ENCODE measurements at regions of chr3 and their contacts with region 1.

Region 1: GRCh38 chr3:62193586-62194345 is 179.6 kb downstream of the FEZF2 start:
- DNase-seq: no peak
- ATAC-seq: no peak
- H3K4me3 ChIP-seq: no peak overlapping the region
- H3K27ac ChIP-seq: no peak overlapping the region
- H3K4me1 ChIP-seq: no peaks in the 10 kb centered on the region
- H3K27me3 ChIP-seq: 0 out of 2 replicates have a peak, but pooled peaks cover 14% of the 10 kb centered on the region
- CTCF ChIP-seq: no peak

Region 2: GRCh38 chr3:62242831-62243509 is 49.2 kb after region 1 on chr3:
- CTCF ChIA-PET with region 1: no interaction called
- POLR2A ChIA-PET with region 1: no interaction called
- intact Hi-C with region 1: no loop called
- DNase-seq: no peak
- ATAC-seq: no peak
- H3K4me3 ChIP-seq: no peak overlapping the region
- H3K27ac ChIP-seq: no peak overlapping the region
- H3K4me1 ChIP-seq: no peaks in the 10 kb centered on the region
- H3K27me3 ChIP-seq: no peaks in the 10 kb centered on the region
- CTCF ChIP-seq: no peak

Region 3: DNA sequence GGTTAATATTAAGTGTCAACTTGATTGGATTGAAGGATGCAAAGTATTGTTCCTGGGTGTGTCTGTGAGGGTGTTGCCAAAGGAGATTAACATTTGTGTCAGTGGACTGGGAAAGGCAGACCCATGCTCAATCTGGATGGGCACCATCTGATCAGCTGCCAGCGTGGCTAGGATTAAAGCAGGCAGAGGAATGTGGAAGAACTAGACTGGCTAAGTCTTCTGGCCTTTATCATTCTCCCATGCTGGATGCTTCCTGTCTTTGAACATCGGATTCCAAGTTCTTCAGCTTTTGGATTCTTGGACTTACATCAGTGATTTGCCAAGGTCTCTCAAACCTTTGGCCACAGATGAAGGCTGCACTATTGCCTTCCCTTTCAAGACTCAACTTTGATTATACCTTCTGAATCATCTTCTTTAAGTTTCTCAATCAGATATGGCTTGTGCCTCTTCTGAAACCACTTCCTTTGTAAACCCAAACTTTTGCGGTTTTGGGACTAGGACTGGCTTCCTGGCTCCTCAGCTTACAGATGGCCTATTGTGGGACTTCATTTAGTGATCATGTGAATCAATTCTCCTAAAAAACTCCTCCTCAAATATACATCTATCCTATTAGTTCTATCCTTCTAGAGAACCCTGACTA is 728.4 kb after region 1 on chr3:
- CTCF ChIA-PET with region 1: no interaction called
- POLR2A ChIA-PET with region 1: no interaction called
- intact Hi-C with region 1: loop called (anchors 10 kb)
- DNase-seq: peak; percentile 3
- ATAC-seq: no peak
- H3K4me3 ChIP-seq: no peak overlapping the region
- H3K27ac ChIP-seq: no peak overlapping the region
- H3K4me1 ChIP-seq: no peaks in the 10 kb centered on the region
- H3K27me3 ChIP-seq: no peaks in the 10 kb centered on the region
- CTCF ChIP-seq: no peak

Measured in PC-3 (cell line).